ENCODE measurements at regions of chr4 and their contacts with region 1.

Region 1: GRCh38 chr4:46945062-46945461 is 36.0 kb upstream of the COX7B2 start:
- DNase-seq: no peak

Region 2: GRCh38 chr4:46993075-46994006 is 48.3 kb after region 1 on chr4 and contains the start of gene GABRA4:
- intact Hi-C with region 1: loop called (anchors 2 kb)
- DNase-seq: peak; percentile 75
- total RNA-seq, gene GABRA4: 65.5 TPM

Region 3: DNA sequence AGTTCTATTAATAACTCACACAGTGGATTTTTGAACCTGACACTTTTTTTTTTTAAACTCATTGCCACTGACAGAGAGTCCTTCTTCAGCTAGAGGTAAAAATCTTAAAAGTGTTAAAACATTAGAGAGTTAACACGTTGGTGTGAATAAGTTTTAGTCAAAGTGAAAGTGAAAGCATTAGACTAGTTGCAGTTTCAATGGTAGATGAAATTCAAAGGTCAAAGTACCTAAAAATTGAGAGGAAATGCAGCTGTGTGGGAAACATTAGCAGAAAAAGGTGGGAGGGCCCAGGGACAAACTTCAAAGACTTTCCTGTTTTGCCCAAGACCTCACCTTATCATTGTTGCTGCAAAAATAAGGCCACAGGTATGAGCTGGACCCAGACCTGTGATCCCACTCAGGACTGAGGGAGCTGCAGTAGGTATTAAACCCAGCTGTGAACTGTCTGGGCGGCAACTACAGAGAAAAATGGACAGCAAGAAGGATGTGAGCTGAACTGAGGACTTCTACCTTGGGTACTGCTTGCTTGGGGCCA is 65.9 kb after region 1 on chr4:
- intact Hi-C with region 1: no loop called
- DNase-seq: no peak

Measured in cardiac septum (tissue), 1 donor.